Astrocyte of the cerebellum (primary cell): ENCODE measurements at regions of chr10 and their contacts with region 1.

Region 1: DNA sequence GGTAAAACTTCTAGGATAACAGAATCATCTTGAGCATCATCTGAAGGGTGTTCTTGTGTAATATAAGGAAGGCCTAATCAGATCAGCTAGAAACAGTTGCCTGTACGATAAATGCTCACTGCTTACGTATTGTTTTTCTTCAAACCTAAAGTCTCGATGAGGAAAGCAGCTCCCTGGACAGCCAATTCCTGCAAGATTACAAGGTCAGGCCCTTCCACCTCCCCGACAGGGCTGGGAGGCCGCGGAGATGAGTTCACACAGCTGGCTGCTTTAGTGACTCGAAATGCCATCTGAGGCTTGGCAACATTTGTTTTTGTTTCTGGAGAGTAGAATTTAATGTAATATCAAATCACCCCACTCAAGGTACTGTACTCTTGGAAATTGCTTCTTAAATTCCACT is 95.1 kb upstream of the PFKP start:
- DNase-seq: no peak
- H3K4me3 ChIP-seq: no peak overlapping the region
- CTCF ChIP-seq: no peak

Region 2: DNA sequence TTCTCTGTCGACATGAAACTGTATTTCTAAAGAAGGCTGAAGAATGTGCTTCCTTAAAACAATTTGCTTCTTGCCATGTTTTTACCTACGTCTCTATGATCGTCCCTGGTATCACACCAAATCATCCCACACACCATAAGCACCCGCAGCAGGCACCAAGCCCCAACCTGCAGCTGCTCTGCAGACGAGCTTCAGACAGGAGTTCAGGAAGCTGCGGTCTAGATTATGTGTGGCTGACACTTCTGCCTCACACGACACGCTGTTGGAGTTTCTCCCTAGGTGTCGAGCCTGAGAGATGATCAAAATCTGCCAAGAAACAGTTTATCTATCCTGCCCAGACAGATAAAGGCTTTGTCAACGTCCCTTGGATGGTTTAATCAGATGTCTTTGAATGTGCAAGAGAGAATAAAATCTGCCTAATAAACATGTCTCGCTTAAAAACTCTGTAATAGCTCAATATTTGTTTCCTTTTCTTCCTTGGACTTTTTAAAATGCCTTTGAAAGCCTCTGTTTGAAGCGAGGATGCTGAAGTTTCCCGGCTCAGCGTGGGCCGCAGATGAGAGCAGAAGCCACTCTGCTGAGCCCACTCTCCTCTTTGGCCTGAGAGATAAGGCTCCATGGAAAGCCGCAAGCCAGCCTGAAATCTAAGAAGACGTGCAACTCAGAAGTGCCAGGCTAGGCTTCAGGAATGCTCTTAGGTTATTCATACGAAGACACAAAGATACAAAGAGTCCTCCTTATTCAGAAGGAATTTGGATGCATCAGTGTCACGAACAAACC is 63.2 kb before region 1 on chr10:
- in situ Hi-C with region 1: no loop called
- DNase-seq: no peak
- H3K4me3 ChIP-seq: no peak overlapping the region
- CTCF ChIP-seq: no peak

Region 3: DNA sequence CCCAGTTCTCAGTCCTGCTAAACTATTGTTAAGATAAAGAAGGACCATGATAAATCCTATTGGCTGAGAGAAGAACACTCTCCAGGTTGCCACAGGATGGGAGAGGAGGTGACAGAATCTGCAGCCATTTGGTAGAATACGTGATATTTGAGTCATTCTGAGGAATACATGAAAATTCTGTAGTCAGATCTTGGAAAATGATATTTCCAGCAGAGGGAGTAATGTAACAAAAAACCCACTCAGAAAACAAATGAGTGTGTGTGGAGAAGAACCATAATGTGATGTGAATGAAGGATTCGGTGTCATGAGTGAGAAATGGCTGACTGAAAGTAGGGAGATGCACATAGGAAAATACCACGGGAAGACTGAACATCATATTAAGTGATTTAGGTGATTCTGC is 33.3 kb before region 1 on chr10:
- in situ Hi-C with region 1: loop called (anchors 5 kb)
- DNase-seq: no peak
- H3K4me3 ChIP-seq: no peak overlapping the region
- CTCF ChIP-seq: peak; percentile 13

Region 4: GRCh38 chr10:3025300-3025699 is 53.1 kb after region 1 on chr10:
- in situ Hi-C with region 1: no loop called
- DNase-seq: no peak
- H3K4me3 ChIP-seq: no peak overlapping the region
- CTCF ChIP-seq: no peak